T-cell (primary cell): ENCODE measurements at regions of chr5 and their contacts with region 1.

Region 1: DNA sequence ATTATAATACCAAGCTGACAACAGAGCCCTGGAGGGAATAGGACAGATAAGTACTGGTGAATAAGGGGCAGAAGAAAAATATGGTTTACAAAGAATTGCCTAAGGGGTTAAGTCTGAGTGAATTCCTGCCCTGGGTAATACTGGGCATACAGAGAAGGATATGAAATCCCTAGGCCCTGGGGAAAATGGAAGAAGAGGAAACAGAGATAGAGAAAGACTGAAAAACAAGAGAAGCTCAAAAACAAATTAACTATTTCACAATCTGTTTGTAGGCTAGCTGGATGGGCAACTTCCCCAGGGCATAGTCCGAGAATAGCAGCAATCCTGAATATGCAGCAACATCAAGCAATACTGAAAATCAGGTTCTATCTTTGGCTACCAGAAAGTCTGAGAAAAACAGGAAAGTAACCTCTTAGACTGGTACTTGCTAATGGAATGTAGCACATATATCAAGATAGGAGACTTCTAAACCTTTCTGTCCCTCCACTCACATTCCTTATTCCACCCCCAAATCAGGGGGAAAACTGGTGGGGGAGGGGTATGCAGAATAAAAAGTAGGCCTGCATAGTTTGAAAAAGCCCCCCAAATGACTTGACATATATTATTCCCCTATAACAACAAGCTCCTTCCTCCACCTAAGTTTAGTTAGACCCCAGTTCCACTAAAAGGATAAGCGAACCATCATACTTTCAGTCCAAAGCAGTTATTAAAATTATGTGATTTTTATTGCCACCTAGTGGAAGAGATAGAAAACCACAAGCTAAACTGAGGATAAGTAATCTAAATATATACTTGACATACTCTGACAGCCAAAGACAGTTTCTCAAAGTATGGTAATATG is 20.6 kb downstream of the SLC38A9 start:
- DNase-seq: peak in 1 of 35 experiments; percentile 54
- ATAC-seq: peak in 1 of 4 experiments; percentile 45
- H3K4me3 ChIP-seq: no peak overlapping the region
- H3K4me3 Mint-ChIP-seq: no peak overlapping the region
- H3K27ac ChIP-seq: no peak overlapping the region
- H3K27ac Mint-ChIP-seq: no peak overlapping the region
- H3K4me1 ChIP-seq: no peaks in the 10 kb centered on the region
- H3K4me1 Mint-ChIP-seq: peaks cover 0 to 4% (median 2%) of the 10 kb centered on the region in 3 donors
- H3K27me3 ChIP-seq: no peaks in the 10 kb centered on the region
- H3K27me3 Mint-ChIP-seq: no peaks in the 10 kb centered on the region

Region 2: GRCh38 chr5:55344392-55344992 is 347.0 kb before region 1 on chr5:
- CTCF ChIA-PET with region 1: interaction called, 12 to 32 read pairs
- POLR2A ChIA-PET with region 1: no interaction called
- DNase-seq: peak in 31 of 35 experiments; percentile 12 to 77 (median 51)
- ATAC-seq: no peak
- H3K4me3 ChIP-seq: no peak overlapping the region
- H3K4me3 Mint-ChIP-seq: no peak overlapping the region
- H3K27ac ChIP-seq: no peak overlapping the region
- H3K27ac Mint-ChIP-seq: peak overlapping the region; percentile 76 to 80
- H3K4me1 ChIP-seq: no peaks in the 10 kb centered on the region
- H3K4me1 Mint-ChIP-seq: peaks cover 0 to 4% (median 2%) of the 10 kb centered on the region in 3 donors
- H3K27me3 ChIP-seq: no peaks in the 10 kb centered on the region
- H3K27me3 Mint-ChIP-seq: no peaks in the 10 kb centered on the region

Region 3: GRCh38 chr5:55406292-55406691 is 285.2 kb before region 1 on chr5:
- CTCF ChIA-PET with region 1: interaction called, 8 to 12 read pairs
- POLR2A ChIA-PET with region 1: interaction called in 1 of 2 experiments, 3 read pairs
- DNase-seq: no peak
- ATAC-seq: no peak
- H3K4me3 ChIP-seq: no peak overlapping the region
- H3K4me3 Mint-ChIP-seq: no peak overlapping the region
- H3K27ac ChIP-seq: no peak overlapping the region
- H3K27ac Mint-ChIP-seq: no peak overlapping the region
- H3K4me1 ChIP-seq: no peaks in the 10 kb centered on the region
- H3K4me1 Mint-ChIP-seq: peaks cover 0 to 6% (median 5%) of the 10 kb centered on the region in 3 donors
- H3K27me3 ChIP-seq: no peaks in the 10 kb centered on the region
- H3K27me3 Mint-ChIP-seq: no peaks in the 10 kb centered on the region

Region 4: GRCh38 chr5:55675119-55675518 is 16.4 kb before region 1 on chr5:
- CTCF ChIA-PET with region 1: no interaction called
- POLR2A ChIA-PET with region 1: no interaction called
- DNase-seq: no peak
- ATAC-seq: no peak
- H3K4me3 ChIP-seq: no peak overlapping the region
- H3K4me3 Mint-ChIP-seq: no peak overlapping the region
- H3K27ac ChIP-seq: no peak overlapping the region
- H3K27ac Mint-ChIP-seq: no peak overlapping the region
- H3K4me1 ChIP-seq: peaks cover 0 to 2% of the 10 kb centered on the region in 2 experiments
- H3K4me1 Mint-ChIP-seq: peaks cover 2 to 7% (median 5%) of the 10 kb centered on the region in 3 donors
- H3K27me3 ChIP-seq: no peaks in the 10 kb centered on the region
- H3K27me3 Mint-ChIP-seq: no peaks in the 10 kb centered on the region